PC-9 (cell line): ENCODE measurements at regions of chr11 and their contacts with region 1.

Region 1: DNA sequence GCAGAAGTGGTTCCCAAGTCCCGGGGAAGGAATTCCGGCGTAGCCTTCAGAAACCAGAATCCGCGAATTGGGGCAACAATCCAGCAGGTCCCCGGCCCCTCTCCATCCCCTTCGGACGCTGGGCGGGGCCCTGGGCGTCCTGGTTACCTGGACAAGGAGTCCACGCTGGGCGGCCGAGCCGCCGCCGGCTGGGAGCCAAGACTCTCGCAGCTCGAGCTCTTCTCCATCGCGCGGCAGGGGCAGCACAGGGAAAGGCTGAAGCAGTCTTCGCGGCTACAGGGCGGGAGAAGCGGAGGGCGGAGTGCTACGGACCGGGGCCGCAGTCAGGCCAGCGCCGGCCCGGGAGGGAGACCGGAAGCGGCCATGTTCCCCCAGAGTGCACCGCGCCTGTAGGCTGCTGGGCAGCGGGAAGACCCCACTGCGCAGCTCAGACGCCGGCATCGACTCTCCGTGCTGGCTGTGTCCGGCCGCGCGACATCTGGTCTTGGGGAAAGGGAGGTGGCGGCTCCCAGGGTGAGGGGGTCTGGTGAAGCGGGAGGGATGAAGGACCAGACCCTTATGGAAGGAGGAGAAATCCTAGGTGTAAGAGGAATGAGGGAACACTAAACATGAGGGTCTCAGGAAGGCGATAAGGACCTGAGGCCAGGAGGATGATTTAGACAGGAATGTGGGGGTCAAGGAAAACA is at the start of gene MTMR2:
- DNase-seq: peak; percentile 72 to 77
- H3K4me3 ChIP-seq: peak within 1 kb of the TSS; percentile 67
- H3K27ac ChIP-seq: peak within 1 kb of the TSS; percentile 97
- H3K4me1 ChIP-seq: peaks cover 37% of the 10 kb centered on the region
- H3K27me3 ChIP-seq: no peaks in the 10 kb centered on the region
- CTCF ChIP-seq: no peak
- total RNA-seq, gene MTMR2: 41.6 and 60.7 TPM in 2 replicates

Region 2: DNA sequence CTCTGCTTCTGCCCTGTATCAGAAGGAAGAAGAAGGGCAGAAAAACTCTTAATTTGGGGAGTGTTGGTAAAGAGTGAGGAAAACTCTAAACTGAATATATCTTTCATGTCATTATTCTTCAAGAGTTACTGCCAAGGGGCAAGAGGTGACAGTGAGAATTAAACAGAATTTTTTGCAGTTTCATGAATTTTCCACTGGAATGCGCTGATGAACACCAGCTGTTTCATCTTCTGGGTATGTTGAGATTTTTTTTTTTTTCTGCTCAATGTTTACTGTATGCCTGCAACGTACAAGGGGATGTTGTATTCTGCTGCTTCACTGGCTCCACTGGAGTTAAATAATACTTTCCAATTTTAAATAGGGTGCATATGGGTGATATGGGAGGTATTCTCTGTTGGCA is 252.1 kb before region 1 on chr11:
- CTCF ChIA-PET with region 1: no interaction called
- POLR2A ChIA-PET with region 1: no interaction called
- intact Hi-C with region 1: no loop called
- DNase-seq: no peak
- H3K4me3 ChIP-seq: no peak overlapping the region
- H3K27ac ChIP-seq: no peak overlapping the region
- H3K4me1 ChIP-seq: no peaks in the 10 kb centered on the region
- H3K27me3 ChIP-seq: no peaks in the 10 kb centered on the region
- CTCF ChIP-seq: no peak

Region 3: GRCh38 chr11:95977534-95978174 is 53.8 kb after region 1 on chr11:
- CTCF ChIA-PET with region 1: no interaction called
- POLR2A ChIA-PET with region 1: interaction called, 8 read pairs
- intact Hi-C with region 1: loop called (anchors 5 kb)
- DNase-seq: peak in 1 of 2 experiments; percentile 93
- H3K4me3 ChIP-seq: peak overlapping the region; percentile 15; the same call in 1 of the 2 replicates
- H3K27ac ChIP-seq: peak overlapping the region; percentile 58
- H3K4me1 ChIP-seq: peaks cover 32% of the 10 kb centered on the region
- H3K27me3 ChIP-seq: no peaks in the 10 kb centered on the region
- CTCF ChIP-seq: no peak

Region 4: DNA sequence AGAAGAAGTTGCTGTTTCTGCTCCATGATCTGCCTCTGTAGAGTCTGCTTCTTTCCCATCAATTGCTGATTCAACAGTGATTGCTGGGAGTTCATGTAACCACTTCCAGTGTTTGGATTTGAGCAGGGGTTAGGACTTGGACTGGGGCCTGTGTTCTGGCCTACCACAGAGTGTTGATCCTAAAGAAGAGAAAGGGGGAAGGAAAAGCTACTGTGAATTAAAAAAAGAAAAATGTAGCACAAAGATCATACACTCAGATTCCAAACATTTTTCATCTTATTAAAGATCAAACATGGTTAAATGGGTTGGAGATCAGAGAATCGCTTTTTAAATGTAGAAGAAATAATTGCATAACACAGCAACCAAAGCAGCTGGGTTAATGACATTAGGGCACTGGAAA is 67.7 kb after region 1 on chr11:
- CTCF ChIA-PET with region 1: no interaction called
- POLR2A ChIA-PET with region 1: interaction called, 7 read pairs
- intact Hi-C with region 1: loop called (anchors 1 kb)
- DNase-seq: peak in 1 of 2 experiments; percentile 56
- H3K4me3 ChIP-seq: no peak overlapping the region
- H3K27ac ChIP-seq: peak overlapping the region; percentile 75
- H3K4me1 ChIP-seq: peaks cover 30% of the 10 kb centered on the region
- H3K27me3 ChIP-seq: no peaks in the 10 kb centered on the region
- CTCF ChIP-seq: no peak

Region 5: GRCh38 chr11:96012086-96012824 is 88.4 kb after region 1 on chr11:
- CTCF ChIA-PET with region 1: no interaction called
- POLR2A ChIA-PET with region 1: interaction called, 5 read pairs
- intact Hi-C with region 1: loop called (anchors 1 kb)
- DNase-seq: peak; percentile 53 to 65
- H3K4me3 ChIP-seq: no peak overlapping the region
- H3K27ac ChIP-seq: no peak overlapping the region
- H3K4me1 ChIP-seq: peaks cover 24% of the 10 kb centered on the region
- H3K27me3 ChIP-seq: no peaks in the 10 kb centered on the region
- CTCF ChIP-seq: peak; percentile 21; the same call in 1 of the 2 replicates

Region 6: GRCh38 chr11:96054870-96055705 is 131.2 kb after region 1 on chr11:
- CTCF ChIA-PET with region 1: no interaction called
- POLR2A ChIA-PET with region 1: interaction called, 12 read pairs
- intact Hi-C with region 1: no loop called
- DNase-seq: peak in 1 of 2 experiments; percentile 50
- H3K4me3 ChIP-seq: no peak overlapping the region
- H3K27ac ChIP-seq: peak overlapping the region; percentile 47
- H3K4me1 ChIP-seq: peaks cover 64% of the 10 kb centered on the region
- H3K27me3 ChIP-seq: no peaks in the 10 kb centered on the region
- CTCF ChIP-seq: peak; percentile 79

Region 7: DNA sequence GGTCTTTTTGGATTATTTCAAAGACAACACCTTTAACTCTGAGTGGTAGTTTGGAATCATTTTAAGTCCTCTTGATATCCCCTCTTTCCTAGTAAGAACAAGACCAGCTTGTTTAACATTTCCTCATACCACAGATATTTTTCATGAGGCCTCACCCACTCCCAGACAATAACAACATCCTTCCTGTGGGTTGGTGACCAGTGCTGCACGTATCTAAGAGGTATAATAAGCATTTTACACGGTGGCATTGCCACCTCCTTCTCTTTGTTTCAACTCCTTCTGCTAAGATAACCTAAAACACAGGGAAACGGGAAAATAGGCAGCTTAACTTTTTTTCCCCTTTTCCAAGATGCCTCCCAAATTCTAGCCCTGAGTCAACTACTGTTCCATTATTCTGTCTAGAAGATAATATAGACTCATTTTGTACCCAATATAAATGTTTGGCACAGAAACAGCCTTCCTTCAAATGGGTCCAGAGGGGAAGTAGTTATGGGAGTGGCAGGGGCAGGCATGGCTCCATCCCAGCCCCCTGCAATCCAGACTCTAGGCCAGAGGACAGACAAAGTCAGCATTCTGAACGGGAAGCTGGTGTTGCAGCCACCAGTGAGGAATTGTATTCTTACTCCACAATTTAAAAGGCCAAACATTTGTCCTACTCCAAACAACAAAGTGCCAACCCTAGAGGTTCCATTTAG is 390.6 kb after region 1 on chr11:
- CTCF ChIA-PET with region 1: no interaction called
- POLR2A ChIA-PET with region 1: interaction called, 4 read pairs
- intact Hi-C with region 1: loop called (anchors 5 kb)
- DNase-seq: peak; percentile 69 to 100
- H3K4me3 ChIP-seq: peak overlapping the region; percentile 41
- H3K27ac ChIP-seq: peak overlapping the region; percentile 96
- H3K4me1 ChIP-seq: peaks cover 100% of the 10 kb centered on the region
- H3K27me3 ChIP-seq: no peaks in the 10 kb centered on the region
- CTCF ChIP-seq: no peak